Left lung (tissue), 14 donors: ENCODE measurements at regions of chr1 and their contacts with region 1.

Region 1: GRCh38 chr1:171226747-171227370 is 21.4 kb upstream of the FMO1 start:
- DNase-seq: peak in 2 of 4 donors; percentile 55 to 77
- ATAC-seq: peak; percentile 93
- H3K4me3 ChIP-seq: no peak overlapping the region
- H3K27ac ChIP-seq: no peak overlapping the region
- H3K4me1 ChIP-seq: no peaks in the 10 kb centered on the region
- H3K27me3 ChIP-seq: no peaks in the 10 kb centered on the region
- CTCF ChIP-seq: peak; percentile 43 to 66

Region 2: DNA sequence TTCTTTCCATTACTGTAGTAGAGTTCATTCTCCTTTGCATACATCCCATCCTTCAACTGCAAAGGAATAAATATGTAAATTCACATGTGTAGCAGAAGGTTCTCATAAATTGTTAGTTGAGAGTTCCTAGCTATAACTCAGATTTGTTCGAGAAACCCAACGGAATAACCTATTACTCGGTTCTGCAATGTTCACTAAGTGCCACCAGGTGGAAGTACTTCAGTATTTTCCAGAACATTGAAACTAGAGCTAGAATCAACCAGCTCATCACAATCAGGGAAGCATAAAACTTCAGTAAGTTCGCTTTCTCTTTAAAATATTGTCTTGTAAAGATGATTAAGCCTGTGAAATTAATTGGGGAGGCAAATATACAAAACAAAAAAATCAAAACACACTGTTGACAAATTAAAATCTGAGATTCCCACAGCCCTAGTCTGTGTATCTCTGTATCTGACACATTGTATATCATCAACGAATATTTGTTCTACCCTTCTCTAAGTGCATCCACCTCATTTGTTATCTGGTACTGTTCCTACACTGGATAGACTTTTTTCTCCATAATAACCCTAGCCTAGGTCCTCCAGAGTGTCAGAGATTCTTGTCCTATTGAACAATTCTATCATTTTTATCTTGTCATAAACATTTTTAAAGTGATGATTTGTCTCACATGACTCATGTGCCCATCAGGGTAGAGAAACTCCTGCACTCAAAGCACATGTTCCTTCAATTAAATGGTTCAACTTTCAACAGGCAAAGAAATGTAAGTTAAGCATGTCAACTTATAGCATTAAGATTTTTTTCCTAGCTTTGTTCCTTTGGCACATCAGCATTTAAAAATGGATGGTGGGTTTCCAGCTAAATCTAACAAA is 259.6 kb before region 1 on chr1:
- intact Hi-C with region 1: loop called in 1 of 2 experiments (anchors 10 kb)
- DNase-seq: peak in 2 of 4 donors; percentile 36 to 58
- ATAC-seq: peak; percentile 86
- H3K4me3 ChIP-seq: no peak overlapping the region
- H3K27ac ChIP-seq: no peak overlapping the region
- H3K4me1 ChIP-seq: no peaks in the 10 kb centered on the region
- H3K27me3 ChIP-seq: no peaks in the 10 kb centered on the region
- CTCF ChIP-seq: peak; percentile 46 to 67

Region 3: DNA sequence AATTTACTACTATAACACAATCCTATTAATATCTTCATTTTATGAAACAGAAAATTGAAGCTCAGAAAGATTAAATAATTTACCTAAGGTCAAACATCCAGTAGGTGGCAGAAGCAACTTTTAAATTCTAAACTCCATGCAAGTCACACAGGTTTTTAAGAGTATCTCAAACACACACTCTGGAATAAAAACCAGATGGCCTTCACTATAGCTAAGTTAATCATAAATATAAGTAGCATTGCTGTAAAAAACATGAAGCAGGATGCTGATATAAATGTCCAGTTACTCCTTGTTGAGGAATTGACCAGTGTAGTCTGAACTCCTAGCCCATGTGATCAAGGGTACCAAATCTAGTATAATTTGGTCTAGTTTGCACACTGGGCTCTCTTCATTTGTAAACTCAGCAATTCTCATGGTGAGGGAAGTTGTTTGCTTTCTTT is 145.5 kb before region 1 on chr1:
- intact Hi-C with region 1: loop called in 1 of 2 experiments (anchors 10 kb)
- DNase-seq: peak in 2 of 4 donors; percentile 42 to 57
- ATAC-seq: peak; percentile 80
- H3K4me3 ChIP-seq: no peak overlapping the region
- H3K27ac ChIP-seq: peak overlapping the region in 1 of 2 donors; percentile 67
- H3K4me1 ChIP-seq: peaks cover 0 to 7% of the 10 kb centered on the region in 2 donors
- H3K27me3 ChIP-seq: no peaks in the 10 kb centered on the region
- CTCF ChIP-seq: peak in 1 of 2 donors; percentile 20